ENCODE measurements at regions of chr12 and their contacts with region 1.

Region 1: DNA sequence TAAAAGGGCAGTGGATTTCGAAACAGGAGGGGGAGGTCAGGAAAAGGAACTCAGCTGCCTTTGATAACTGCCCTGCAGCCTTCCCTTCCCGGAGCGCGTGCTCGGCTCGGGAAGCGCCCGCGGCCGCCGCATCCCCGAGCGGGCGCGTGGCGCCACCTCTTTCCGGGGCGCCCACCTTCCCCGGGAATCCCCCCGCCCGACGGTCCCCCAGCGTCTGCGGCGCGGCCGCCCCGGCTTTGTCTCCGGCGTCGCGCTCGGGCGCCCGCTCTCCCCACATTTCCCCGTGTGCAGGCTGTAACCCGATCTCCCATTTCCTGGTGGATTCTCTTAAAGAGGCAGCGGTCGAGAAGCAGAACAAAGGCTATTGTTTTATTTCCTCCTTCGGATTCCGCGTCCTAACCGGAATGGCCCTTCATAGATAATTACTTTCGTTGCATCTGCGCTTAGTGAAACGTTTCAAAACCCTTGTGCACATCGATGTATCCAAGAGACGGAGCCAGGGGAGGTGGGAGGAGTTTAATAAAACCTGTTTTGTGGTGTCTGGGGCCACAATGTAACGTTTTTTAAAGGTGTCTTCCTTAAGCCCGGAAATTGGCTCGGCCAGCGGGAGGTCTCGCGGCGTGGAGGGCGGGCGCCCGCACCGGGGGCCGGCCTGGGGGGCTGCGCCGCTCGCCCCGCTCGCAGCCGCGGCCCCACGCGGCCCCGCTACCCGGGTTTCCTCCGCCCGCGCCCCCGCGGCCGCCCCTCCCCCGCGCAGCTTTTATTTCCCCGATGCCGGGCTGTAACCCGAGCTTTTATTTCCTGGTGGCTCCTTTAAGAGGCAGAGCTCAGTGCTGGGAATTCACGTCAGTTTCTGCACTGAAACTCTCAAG is at the start of gene ETV6:
- DNase-seq: peak; percentile 86
- ATAC-seq: peak; percentile 48
- H3K4me3 ChIP-seq: peak within 1 kb of the TSS; percentile 77 to 96 (median 87)
- H3K4me3 Mint-ChIP-seq: peak within 1 kb of the TSS; percentile 93
- H3K27ac ChIP-seq: peak within 1 kb of the TSS; percentile 72 to 81
- H3K27ac Mint-ChIP-seq: peak within 1 kb of the TSS; percentile 97
- H3K4me1 ChIP-seq: peaks cover 24 to 29% of the 10 kb centered on the region in 2 donors
- H3K4me1 Mint-ChIP-seq: peaks cover 34% of the 10 kb centered on the region
- H3K27me3 ChIP-seq: no peaks in the 10 kb centered on the region
- H3K27me3 Mint-ChIP-seq: no peaks in the 10 kb centered on the region
- CTCF ChIP-seq: no peak
- total RNA-seq, gene ETV6: 123 and 131 TPM in 2 replicates

Region 2: DNA sequence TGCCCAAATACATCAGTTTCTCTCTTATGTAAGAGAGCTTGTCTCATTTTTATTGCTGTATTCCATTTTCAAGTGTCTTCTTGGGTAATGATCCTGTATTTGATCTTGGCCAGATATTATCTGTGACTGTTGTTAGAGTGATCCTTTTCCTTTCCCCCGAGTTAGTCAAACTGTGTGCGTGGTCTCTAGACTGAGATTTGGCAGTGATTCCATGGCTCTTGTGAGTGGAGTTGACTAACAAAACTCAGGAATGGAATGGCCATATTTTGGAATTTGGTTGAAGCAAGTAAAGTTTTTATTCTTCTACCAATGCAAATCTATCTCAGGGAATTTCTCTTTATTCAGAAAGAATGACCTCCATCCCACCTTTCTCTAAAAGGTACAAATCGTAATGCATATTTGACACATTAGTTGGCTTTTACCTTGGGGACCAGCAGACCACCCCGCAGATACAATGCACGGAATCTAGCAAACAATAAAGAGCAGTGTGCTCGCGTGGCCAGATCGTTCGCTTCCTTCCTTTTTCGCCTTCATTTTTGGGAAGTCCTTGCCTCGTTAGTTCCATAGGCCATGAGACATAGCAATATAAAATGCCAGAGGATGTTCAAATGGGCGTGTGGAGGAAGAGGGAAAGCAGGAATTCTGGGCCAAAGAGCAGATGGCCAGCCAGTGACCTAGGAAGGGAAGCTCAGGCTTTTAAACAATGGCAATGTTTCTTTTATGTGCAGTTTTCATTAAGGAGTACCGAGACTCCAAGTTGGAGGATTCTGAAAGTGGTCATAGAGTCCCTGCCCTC is 24.8 kb after region 1 on chr12:
- CTCF ChIA-PET with region 1: no interaction called
- POLR2A ChIA-PET with region 1: interaction called, 3 read pairs
- intact Hi-C with region 1: loop called (anchors 2 kb)
- DNase-seq: no peak
- ATAC-seq: no peak
- H3K4me3 ChIP-seq: no peak overlapping the region
- H3K4me3 Mint-ChIP-seq: no peak overlapping the region
- H3K27ac ChIP-seq: no peak overlapping the region
- H3K27ac Mint-ChIP-seq: no peak overlapping the region
- H3K4me1 ChIP-seq: peaks cover 29 to 35% of the 10 kb centered on the region in 2 donors
- H3K4me1 Mint-ChIP-seq: peaks cover 79% of the 10 kb centered on the region
- H3K27me3 ChIP-seq: no peaks in the 10 kb centered on the region
- H3K27me3 Mint-ChIP-seq: no peaks in the 10 kb centered on the region
- CTCF ChIP-seq: no peak

Region 3: GRCh38 chr12:11730299-11731041 is 81.4 kb after region 1 on chr12:
- CTCF ChIA-PET with region 1: interaction called, 3 read pairs
- POLR2A ChIA-PET with region 1: interaction called, 4 read pairs
- intact Hi-C with region 1: loop called (anchors 2 kb)
- DNase-seq: peak; percentile 83
- ATAC-seq: peak; percentile 80
- H3K4me3 ChIP-seq: no peak overlapping the region
- H3K4me3 Mint-ChIP-seq: peak overlapping the region; percentile 79
- H3K27ac ChIP-seq: peak overlapping the region; percentile 69 to 76
- H3K27ac Mint-ChIP-seq: peak overlapping the region; percentile 94
- H3K4me1 ChIP-seq: peaks cover 82 to 94% of the 10 kb centered on the region in 2 donors
- H3K4me1 Mint-ChIP-seq: peaks cover 92% of the 10 kb centered on the region
- H3K27me3 ChIP-seq: no peaks in the 10 kb centered on the region
- H3K27me3 Mint-ChIP-seq: no peaks in the 10 kb centered on the region
- CTCF ChIP-seq: no peak

Region 4: GRCh38 chr12:11765817-11766794 is 117.0 kb after region 1 on chr12:
- CTCF ChIA-PET with region 1: no interaction called
- POLR2A ChIA-PET with region 1: interaction called, 11 read pairs
- intact Hi-C with region 1: loop called (anchors 2 kb)
- DNase-seq: peak; percentile 86
- ATAC-seq: peak; percentile 78
- H3K4me3 ChIP-seq: peak overlapping the region in 3 of 5 experiments; percentile 1 to 21 (median 16)
- H3K4me3 Mint-ChIP-seq: peak overlapping the region; percentile 84
- H3K27ac ChIP-seq: peak overlapping the region; percentile 68 to 74
- H3K27ac Mint-ChIP-seq: peak overlapping the region; percentile 91
- H3K4me1 ChIP-seq: peaks cover 63 to 70% of the 10 kb centered on the region in 2 donors
- H3K4me1 Mint-ChIP-seq: peaks cover 83% of the 10 kb centered on the region
- H3K27me3 ChIP-seq: no peaks in the 10 kb centered on the region
- H3K27me3 Mint-ChIP-seq: no peaks in the 10 kb centered on the region
- CTCF ChIP-seq: no peak

Region 5: GRCh38 chr12:11822081-11822834 is 173.2 kb after region 1 on chr12:
- CTCF ChIA-PET with region 1: no interaction called
- POLR2A ChIA-PET with region 1: no interaction called
- intact Hi-C with region 1: no loop called
- DNase-seq: peak; percentile 87
- ATAC-seq: peak; percentile 74
- H3K4me3 ChIP-seq: peak overlapping the region in 3 of 5 experiments; percentile 26 to 45 (median 44)
- H3K4me3 Mint-ChIP-seq: peak overlapping the region; percentile 82
- H3K27ac ChIP-seq: peak overlapping the region; percentile 60 to 84
- H3K27ac Mint-ChIP-seq: peak overlapping the region; percentile 92
- H3K4me1 ChIP-seq: peaks cover 35 to 40% of the 10 kb centered on the region in 2 donors
- H3K4me1 Mint-ChIP-seq: peaks cover 48% of the 10 kb centered on the region
- H3K27me3 ChIP-seq: no peaks in the 10 kb centered on the region
- H3K27me3 Mint-ChIP-seq: no peaks in the 10 kb centered on the region
- CTCF ChIP-seq: no peak

Region 6: DNA sequence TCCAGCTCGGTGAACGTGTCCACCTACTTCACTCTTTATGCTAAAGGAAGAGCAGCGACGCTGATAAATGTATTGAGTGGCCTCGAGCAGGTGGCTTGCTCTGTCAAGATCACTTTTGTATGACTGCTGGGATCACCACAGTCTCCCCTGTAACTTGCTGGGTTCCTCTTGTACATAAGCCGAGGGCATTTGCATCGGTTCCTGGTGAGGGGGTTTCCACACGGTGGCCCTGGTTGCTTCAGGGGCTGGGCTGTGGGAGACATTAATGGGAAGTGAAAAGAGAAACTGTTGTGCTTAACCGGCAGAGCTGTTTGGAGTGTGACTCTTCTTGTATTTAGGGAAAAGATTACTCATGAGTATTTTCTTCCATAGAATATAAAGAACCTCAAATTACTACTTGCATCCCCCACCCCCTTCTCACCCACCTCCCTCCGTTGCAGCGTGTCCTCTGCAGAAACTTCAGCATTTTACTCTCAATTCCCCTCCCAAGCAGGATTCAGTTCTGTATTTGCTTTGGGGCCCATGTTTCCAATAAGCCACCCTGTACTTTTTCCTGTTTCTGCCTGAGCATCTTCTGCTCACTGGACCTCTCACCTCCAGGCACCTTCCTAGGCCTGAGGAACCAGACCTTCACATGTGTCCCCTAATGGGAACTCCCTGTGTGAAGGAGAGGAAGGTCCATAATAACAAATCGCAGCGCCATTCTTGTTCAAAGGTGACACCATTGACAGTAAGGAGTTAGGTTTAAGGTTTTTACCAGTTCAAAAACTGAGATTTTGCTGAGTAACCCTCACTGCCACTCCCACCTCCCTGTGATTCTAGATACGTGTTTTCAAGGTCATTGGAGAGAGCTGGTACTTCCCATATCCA is 187.4 kb after region 1 on chr12:
- CTCF ChIA-PET with region 1: interaction called, 3 read pairs
- POLR2A ChIA-PET with region 1: interaction called, 4 read pairs
- intact Hi-C with region 1: loop called (anchors 1 kb)
- DNase-seq: peak; percentile 93
- ATAC-seq: peak; percentile 96
- H3K4me3 ChIP-seq: peak overlapping the region in 2 of 5 experiments; percentile 6 to 37
- H3K4me3 Mint-ChIP-seq: peak overlapping the region; percentile 64
- H3K27ac ChIP-seq: peak overlapping the region; percentile 74 to 77
- H3K27ac Mint-ChIP-seq: peak overlapping the region; percentile 92
- H3K4me1 ChIP-seq: peaks cover 37 to 53% of the 10 kb centered on the region in 2 donors
- H3K4me1 Mint-ChIP-seq: peaks cover 67% of the 10 kb centered on the region
- H3K27me3 ChIP-seq: no peaks in the 10 kb centered on the region
- H3K27me3 Mint-ChIP-seq: no peaks in the 10 kb centered on the region
- CTCF ChIP-seq: no peak

Region 7: DNA sequence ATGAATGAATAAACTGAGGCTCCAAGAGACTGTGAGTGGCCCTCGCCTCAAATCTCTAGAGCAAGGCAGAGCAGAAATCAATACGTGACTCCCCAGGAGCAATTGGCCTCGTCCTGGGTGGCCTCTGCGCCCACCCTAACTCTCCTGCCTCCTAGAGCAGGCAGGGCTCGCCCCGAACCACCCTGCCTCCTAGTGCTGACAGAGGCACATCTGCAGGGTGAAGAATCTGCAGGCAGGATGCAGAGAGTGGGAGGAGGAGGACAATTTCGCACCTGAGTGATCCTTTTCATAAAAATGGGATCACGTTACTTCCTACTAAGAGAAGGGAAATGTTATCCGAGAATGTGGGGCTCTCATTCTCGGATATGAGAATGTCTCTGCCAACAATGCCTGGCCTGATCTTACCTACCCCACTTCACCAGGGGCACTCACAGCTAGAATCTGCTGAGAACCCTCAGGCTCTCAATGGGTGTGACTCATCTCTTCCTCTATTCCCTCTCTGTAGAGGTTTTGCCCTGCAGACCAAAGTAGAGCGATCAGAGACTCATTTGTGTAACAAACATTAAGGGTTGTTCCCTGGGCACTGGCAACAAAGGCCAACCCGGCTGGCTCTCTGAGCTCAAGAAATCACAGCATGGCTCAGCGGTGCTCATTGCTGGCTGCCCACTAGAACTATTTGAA is 360.0 kb after region 1 on chr12:
- CTCF ChIA-PET with region 1: interaction called, 3 read pairs
- POLR2A ChIA-PET with region 1: no interaction called
- intact Hi-C with region 1: loop called (anchors 1 kb)
- DNase-seq: peak; percentile 26
- ATAC-seq: peak; percentile 59
- H3K4me3 ChIP-seq: no peak overlapping the region
- H3K4me3 Mint-ChIP-seq: peak overlapping the region; percentile 39
- H3K27ac ChIP-seq: no peak overlapping the region
- H3K27ac Mint-ChIP-seq: peak overlapping the region; percentile 73
- H3K4me1 ChIP-seq: peaks cover 46 to 48% of the 10 kb centered on the region in 2 donors
- H3K4me1 Mint-ChIP-seq: peaks cover 61% of the 10 kb centered on the region
- H3K27me3 ChIP-seq: no peaks in the 10 kb centered on the region
- H3K27me3 Mint-ChIP-seq: no peaks in the 10 kb centered on the region
- CTCF ChIP-seq: no peak

Region 8: DNA sequence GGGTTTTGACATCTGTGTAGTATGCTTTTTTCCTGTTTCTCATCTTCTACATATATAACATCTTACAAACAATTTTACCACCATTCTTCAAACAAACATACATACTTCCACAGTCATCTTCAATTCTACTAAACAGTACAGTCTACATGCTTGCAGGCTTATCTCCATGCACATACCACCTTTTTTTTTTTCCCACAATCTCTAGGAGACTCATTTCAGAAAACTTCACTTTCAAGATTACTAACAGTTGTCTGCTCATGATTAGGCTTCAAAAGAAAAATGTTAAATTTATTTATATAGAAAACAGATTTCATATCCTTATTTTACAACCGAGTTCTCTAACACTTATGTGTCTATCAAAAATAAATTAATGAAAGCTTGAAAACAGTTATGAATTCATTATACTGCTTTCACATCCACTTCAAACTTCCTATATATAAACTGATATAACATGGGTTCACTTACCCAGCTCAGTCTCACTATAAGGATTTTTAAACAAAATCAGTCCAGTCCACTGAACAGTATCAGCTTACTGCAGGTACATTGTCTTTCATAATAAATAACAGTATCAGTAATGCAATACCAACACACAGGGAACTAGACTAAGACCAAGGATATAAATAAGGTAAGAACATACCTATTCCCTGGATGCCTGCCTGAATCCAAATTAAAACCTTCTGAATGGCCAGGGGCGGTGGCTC is 575.3 kb after region 1 on chr12:
- CTCF ChIA-PET with region 1: no interaction called
- POLR2A ChIA-PET with region 1: no interaction called
- intact Hi-C with region 1: no loop called
- DNase-seq: no peak
- ATAC-seq: no peak
- H3K4me3 ChIP-seq: no peak overlapping the region
- H3K4me3 Mint-ChIP-seq: no peak overlapping the region
- H3K27ac ChIP-seq: no peak overlapping the region
- H3K27ac Mint-ChIP-seq: no peak overlapping the region
- H3K4me1 ChIP-seq: no peaks in the 10 kb centered on the region
- H3K4me1 Mint-ChIP-seq: no peaks in the 10 kb centered on the region
- H3K27me3 ChIP-seq: no peaks in the 10 kb centered on the region
- H3K27me3 Mint-ChIP-seq: peaks cover 12% of the 10 kb centered on the region
- CTCF ChIP-seq: no peak

Region 9: DNA sequence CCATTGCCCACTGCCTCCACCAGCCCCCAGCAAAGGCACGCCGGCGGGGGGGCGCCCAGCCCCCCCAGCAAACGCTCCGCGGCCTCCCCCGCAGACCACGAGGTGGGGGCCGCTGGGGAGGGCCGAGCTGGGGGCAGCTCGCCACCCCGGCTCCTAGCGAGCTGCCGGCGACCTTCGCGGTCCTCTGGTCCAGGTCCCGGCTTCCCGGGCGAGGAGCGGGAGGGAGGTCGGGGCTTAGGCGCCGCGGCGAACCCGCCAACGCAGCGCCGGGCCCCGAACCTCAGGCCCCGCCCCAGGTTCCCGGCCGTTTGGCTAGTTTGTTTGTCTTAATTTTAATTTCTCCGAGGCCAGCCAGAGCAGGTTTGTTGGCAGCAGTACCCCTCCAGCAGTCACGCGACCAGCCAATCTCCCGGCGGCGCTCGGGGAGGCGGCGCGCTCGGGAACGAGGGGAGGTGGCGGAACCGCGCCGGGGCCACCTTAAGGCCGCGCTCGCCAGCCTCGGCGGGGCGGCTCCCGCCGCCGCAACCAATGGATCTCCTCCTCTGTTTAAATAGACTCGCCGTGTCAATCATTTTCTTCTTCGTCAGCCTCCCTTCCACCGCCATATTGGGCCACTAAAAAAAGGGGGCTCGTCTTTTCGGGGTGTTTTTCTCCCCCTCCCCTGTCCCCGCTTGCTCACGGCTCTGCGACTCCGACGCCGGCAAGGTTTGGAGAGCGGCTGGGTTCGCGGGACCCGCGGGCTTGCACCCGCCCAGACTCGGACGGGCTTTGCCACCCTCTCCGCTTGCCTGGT is 1067.9 kb after region 1 on chr12 and contains the start of gene CDKN1B:
- CTCF ChIA-PET with region 1: no interaction called
- POLR2A ChIA-PET with region 1: no interaction called
- intact Hi-C with region 1: loop called (anchors 5 kb)
- DNase-seq: peak; percentile 92
- ATAC-seq: peak; percentile 64
- H3K4me3 ChIP-seq: peak within 1 kb of the TSS; percentile 82 to 100 (median 96)
- H3K4me3 Mint-ChIP-seq: peak within 1 kb of the TSS; percentile 97
- H3K27ac ChIP-seq: peak within 1 kb of the TSS; percentile 94 to 96
- H3K27ac Mint-ChIP-seq: peak within 1 kb of the TSS; percentile 98
- H3K4me1 ChIP-seq: peaks cover 49 to 53% of the 10 kb centered on the region in 2 donors
- H3K4me1 Mint-ChIP-seq: peaks cover 66% of the 10 kb centered on the region
- H3K27me3 ChIP-seq: no peaks in the 10 kb centered on the region
- H3K27me3 Mint-ChIP-seq: no peaks in the 10 kb centered on the region
- CTCF ChIP-seq: no peak
- total RNA-seq, gene CDKN1B: 133 and 149 TPM in 2 replicates

Measured in B cell (primary cell).